AG04449 (cell line): ENCODE measurements at regions of chr2 and their contacts with region 1.

Region 1: DNA sequence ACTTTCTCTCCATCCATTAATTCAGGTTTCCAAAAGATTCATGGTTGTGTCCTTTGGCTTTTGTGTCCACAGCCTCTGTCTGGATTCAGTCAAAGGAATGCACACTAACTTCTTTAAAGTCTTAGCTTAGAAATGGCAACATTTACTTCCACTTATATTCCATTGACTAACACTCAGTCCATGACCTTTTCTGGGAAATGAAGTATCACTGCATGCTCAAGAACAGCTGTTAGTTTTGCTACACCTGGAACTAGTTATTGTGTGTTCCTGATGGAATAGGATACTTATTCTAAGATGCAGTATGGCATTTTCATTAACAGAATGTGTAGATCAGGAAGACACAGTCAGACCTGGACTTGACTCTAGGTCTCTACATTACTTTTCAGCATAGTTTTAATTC is 88.8 kb downstream of the KYNU start:
- DNase-seq: no peak
- H3K4me3 ChIP-seq: no peak overlapping the region
- CTCF ChIP-seq: no peak

Region 2: GRCh38 chr2:142980561-142981378 is 14.5 kb after region 1 on chr2:
- CTCF ChIA-PET with region 1: interaction called, 12 read pairs
- POLR2A ChIA-PET with region 1: no interaction called
- DNase-seq: no peak
- H3K4me3 ChIP-seq: no peak overlapping the region
- CTCF ChIP-seq: peak; percentile 15